ENCODE measurements at regions of chr11 and their contacts with region 1.

Region 1: GRCh38 chr11:67391304-67392132 is at the start of gene RAD9A:
- DNase-seq: peak; percentile 96
- H3K4me3 Mint-ChIP-seq: peak within 1 kb of the TSS; percentile 93
- H3K27ac Mint-ChIP-seq: peak within 1 kb of the TSS; percentile 56
- H3K4me1 Mint-ChIP-seq: peaks cover 44% of the 10 kb centered on the region
- H3K27me3 Mint-ChIP-seq: peaks cover 5% of the 10 kb centered on the region

Region 2: GRCh38 chr11:67239783-67240575 is 151.5 kb before region 1 on chr11:
- CTCF ChIA-PET with region 1: no interaction called
- DNase-seq: peak; percentile 99
- H3K4me3 Mint-ChIP-seq: peak overlapping the region; percentile 96
- H3K27ac Mint-ChIP-seq: peak overlapping the region; percentile 99
- H3K4me1 Mint-ChIP-seq: peaks cover 56% of the 10 kb centered on the region
- H3K27me3 Mint-ChIP-seq: no peaks in the 10 kb centered on the region

Region 3: GRCh38 chr11:67353317-67354074 is 38.0 kb before region 1 on chr11 and contains the start of gene POLD4:
- CTCF ChIA-PET with region 1: interaction called, 564 read pairs
- DNase-seq: peak; percentile 98
- H3K4me3 Mint-ChIP-seq: peak within 1 kb of the TSS; percentile 95
- H3K27ac Mint-ChIP-seq: peak within 1 kb of the TSS; percentile 99
- H3K4me1 Mint-ChIP-seq: peaks cover 51% of the 10 kb centered on the region
- H3K27me3 Mint-ChIP-seq: peaks cover 11% of the 10 kb centered on the region